ENCODE measurements at regions of chr3 and their contacts with region 1.

Region 1: DNA sequence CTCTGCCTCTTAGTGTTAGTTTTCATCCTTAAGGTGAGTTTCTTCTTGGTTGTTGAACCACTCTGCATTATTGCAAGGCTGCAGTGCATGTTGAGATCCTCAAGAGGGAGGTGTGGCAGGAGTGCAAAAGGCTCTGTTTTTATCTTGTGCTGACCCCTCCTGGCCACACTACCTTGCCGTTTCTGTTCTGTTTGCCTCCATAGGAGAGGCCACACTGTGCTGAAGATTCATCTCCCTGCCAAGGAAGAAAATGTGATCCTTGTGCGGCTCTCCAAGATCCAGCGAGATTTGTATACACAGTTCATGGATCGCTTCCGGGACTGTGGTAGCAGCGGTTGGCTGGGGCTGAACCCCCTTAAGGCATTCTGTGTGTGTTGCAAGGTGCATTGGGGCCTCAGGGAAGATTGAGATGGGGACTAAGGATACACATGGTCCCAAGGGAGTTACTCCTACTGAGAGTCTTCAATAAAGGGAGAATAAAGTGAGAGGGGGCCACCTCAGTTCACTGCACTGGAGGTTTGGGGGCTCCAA is 33.0 kb upstream of the TEX264 start:
- DNase-seq: peak; percentile 84 to 89 (median 85)
- H3K4me3 ChIP-seq: no peak overlapping the region
- H3K27ac ChIP-seq: no peak overlapping the region
- H3K4me1 ChIP-seq: no peaks in the 10 kb centered on the region
- H3K27me3 ChIP-seq: no peaks in the 10 kb centered on the region

Region 2: GRCh38 chr3:51581529-51581928 is 56.5 kb before region 1 on chr3:
- CTCF ChIA-PET with region 1: no interaction called
- POLR2A ChIA-PET with region 1: no interaction called
- DNase-seq: no peak
- H3K4me3 ChIP-seq: no peak overlapping the region
- H3K27ac ChIP-seq: no peak overlapping the region
- H3K4me1 ChIP-seq: peaks cover 0 to 13% (median 6%) of the 10 kb centered on the region in 4 experiments
- H3K27me3 ChIP-seq: no peaks in the 10 kb centered on the region

Region 3: DNA sequence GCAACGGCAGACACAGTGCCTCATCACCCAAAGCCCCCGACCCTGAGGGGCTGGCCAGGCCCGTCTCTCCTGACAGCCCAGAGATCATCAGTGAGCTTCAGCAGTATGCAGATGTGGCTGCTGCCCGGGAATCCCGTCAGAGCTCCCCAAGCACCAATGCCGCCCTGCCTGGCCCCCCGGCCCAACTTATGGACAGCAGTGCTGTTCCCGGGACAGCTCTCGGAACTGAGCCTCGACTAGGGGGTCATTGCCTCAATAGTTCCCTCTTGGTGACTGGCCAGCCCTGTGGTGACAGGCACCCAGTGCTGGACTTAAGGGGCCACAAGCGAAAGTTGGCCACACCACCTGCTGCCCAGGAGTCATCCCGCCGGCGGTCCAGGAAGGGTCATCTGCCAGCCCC is 24.4 kb after region 1 on chr3:
- CTCF ChIA-PET with region 1: interaction called, 30 read pairs
- POLR2A ChIA-PET with region 1: no interaction called
- DNase-seq: no peak
- H3K4me3 ChIP-seq: no peak overlapping the region
- H3K27ac ChIP-seq: no peak overlapping the region
- H3K4me1 ChIP-seq: no peaks in the 10 kb centered on the region
- H3K27me3 ChIP-seq: no peaks in the 10 kb centered on the region

Region 4: GRCh38 chr3:51682079-51682478 is 44.1 kb after region 1 on chr3:
- CTCF ChIA-PET with region 1: interaction called, 146 read pairs
- POLR2A ChIA-PET with region 1: no interaction called
- DNase-seq: peak; percentile 82 to 89 (median 87)
- H3K4me3 ChIP-seq: peak overlapping the region in 5 of 7 experiments; percentile 1 to 53 (median 31)
- H3K27ac ChIP-seq: no peak overlapping the region
- H3K4me1 ChIP-seq: peaks cover 12 to 74% (median 68%) of the 10 kb centered on the region in 4 experiments
- H3K27me3 ChIP-seq: no peaks in the 10 kb centered on the region

Region 5: GRCh38 chr3:51751287-51751686 is 113.3 kb after region 1 on chr3:
- CTCF ChIA-PET with region 1: no interaction called
- POLR2A ChIA-PET with region 1: no interaction called
- DNase-seq: no peak
- H3K4me3 ChIP-seq: no peak overlapping the region
- H3K27ac ChIP-seq: no peak overlapping the region
- H3K4me1 ChIP-seq: no peaks in the 10 kb centered on the region
- H3K27me3 ChIP-seq: no peaks in the 10 kb centered on the region